Spleen (tissue), 13 donors: ENCODE measurements at regions of chr20 and their contacts with region 1.

Region 1: DNA sequence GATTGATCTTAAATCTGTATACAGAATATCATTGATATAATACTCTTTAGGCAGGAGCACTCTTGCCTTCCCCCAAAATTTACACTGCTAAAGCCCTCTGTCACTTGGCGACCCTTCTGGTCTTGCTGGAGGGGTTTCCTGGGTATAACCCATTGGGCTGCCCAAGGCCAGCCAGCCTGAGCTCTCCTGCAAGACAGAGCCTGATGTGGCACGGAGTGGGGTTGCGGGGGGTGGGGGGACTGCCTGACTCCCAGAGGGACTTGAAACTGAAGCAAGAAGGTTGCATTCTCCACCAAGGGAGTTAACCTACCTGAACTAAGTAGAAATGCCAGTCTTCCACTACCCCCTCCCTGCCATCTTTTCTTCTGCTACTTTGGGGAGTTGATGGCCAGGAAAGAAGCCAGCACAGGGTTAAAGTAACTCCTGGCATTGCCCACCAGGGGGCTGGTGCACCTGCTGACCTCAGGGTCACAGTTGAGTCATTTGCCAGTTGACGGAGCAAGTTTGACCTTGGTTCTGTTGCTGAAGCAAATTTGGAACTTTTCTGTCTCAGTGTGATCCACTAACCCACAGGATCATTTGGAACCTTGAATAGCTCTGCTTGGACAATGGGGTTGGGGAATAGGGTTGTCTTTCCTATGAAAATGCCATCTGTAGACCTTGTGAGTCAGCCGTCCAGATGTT is 79.4 kb downstream of the ASXL1 start:
- DNase-seq: no peak
- H3K4me3 ChIP-seq: no peak overlapping the region
- H3K27ac ChIP-seq: peak overlapping the region in 1 of 8 donors; percentile 4
- H3K4me1 ChIP-seq: peaks cover 0 to 13% (median 1%) of the 10 kb centered on the region in 6 donors
- H3K27me3 ChIP-seq: no peaks in the 10 kb centered on the region
- CTCF ChIP-seq: peak in 3 of 11 experiments; percentile 24 to 40 (median 26)
- POLR2A ChIP-seq: no peak

Region 2: GRCh38 chr20:31770243-31770642 is 667.3 kb before region 1 on chr20:
- intact Hi-C with region 1: no loop called
- DNase-seq: no peak
- H3K4me3 ChIP-seq: peak overlapping the region in 1 of 8 donors; percentile 1
- H3K27ac ChIP-seq: no peak overlapping the region
- H3K4me1 ChIP-seq: no peaks in the 10 kb centered on the region
- H3K27me3 ChIP-seq: no peaks in the 10 kb centered on the region
- CTCF ChIP-seq: no peak
- POLR2A ChIP-seq: no peak

Region 3: GRCh38 chr20:32387252-32387651 is 50.3 kb before region 1 on chr20:
- intact Hi-C with region 1: loop called (anchors 10 kb)
- DNase-seq: no peak
- H3K4me3 ChIP-seq: no peak overlapping the region
- H3K27ac ChIP-seq: no peak overlapping the region
- H3K4me1 ChIP-seq: peaks cover 6 to 84% (median 35%) of the 10 kb centered on the region in 6 donors
- H3K27me3 ChIP-seq: no peaks in the 10 kb centered on the region
- CTCF ChIP-seq: no peak
- POLR2A ChIP-seq: no peak